Cardiac septum (tissue), 1 donor: ENCODE measurements at regions of chr17 and their contacts with region 1.

Region 1: DNA sequence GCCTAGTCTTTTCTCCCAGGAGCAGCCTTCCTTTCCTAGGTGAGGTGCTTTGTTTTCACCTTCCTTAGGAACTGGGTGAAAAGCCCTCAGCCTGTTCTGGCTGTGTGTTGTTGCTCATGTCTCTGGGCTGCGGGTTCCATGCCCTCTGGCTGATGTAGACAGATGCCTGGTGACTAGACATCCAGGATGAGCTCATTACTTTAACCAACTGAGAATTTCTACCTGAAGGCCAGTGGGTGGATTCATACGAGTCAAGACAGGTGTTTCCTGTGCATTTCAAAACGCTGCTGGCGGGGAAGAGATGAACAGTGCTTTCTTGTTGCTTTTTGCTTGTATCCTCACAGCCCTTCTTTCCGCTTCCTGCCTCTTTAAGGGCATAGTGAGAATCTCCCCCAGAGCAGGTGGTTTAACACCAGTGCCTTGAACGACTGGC is 22.3 kb downstream of the SAP30BP start:
- DNase-seq: no peak

Region 2: GRCh38 chr17:75707131-75707571 is 17.7 kb after region 1 on chr17:
- intact Hi-C with region 1: loop called (anchors 2 kb)
- DNase-seq: peak; percentile 85